Motor neuron (in vitro differentiated cells): ENCODE measurements at regions of chr9 and their contacts with region 1.

Region 1: DNA sequence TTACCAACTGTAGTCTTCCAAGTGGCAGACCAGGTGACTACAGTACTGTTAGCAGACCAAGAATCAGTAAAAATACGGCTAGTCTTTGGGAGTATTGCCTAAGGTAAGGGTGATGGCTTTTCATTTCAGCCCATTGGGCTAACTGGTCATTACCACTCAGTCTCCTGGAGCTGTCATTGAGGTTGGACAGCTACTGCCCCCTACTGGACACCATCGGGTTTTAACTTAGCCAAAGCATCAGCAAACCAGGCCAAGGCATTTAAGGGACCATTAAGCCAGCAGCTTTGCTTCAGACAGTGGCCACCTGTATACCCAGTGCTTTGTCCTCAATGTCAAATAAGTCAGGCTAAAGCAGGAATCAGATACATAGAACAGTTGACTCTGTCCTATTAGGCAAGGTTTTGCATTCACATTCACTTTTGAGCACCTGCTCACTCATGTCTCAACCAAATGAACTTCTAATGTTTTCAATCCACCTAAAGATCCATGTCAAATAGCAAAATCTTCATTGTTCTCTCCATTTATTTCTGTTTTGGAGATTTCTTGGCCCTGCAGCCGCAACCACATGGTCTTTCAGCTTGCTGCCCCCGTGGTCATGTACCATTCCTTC is 117.2 kb downstream of the INVS start:
- ATAC-seq: peak in 3 of 8 experiments; percentile 76 to 91 (median 88)
- H3K4me3 ChIP-seq: no peak overlapping the region
- H3K27ac ChIP-seq: no peak overlapping the region
- H3K4me1 ChIP-seq: no peaks in the 10 kb centered on the region

Region 2: GRCh38 chr9:99162759-99163364 is 1053.4 kb before region 1 on chr9:
- in situ Hi-C with region 1: loop called in 1 of 9 experiments (anchors 25 kb)
- ATAC-seq: peak in 4 of 8 experiments; percentile 9 to 37 (median 19)
- H3K4me3 ChIP-seq: no peak overlapping the region
- H3K27ac ChIP-seq: no peak overlapping the region
- H3K4me1 ChIP-seq: peaks cover 2 to 8% of the 10 kb centered on the region in 2 donors

Region 3: GRCh38 chr9:100028201-100028784 is 188.0 kb before region 1 on chr9:
- in situ Hi-C with region 1: loop called in 3 of 9 experiments (anchors 25 kb)
- ATAC-seq: peak; percentile 41 to 98 (median 70)
- H3K4me3 ChIP-seq: no peak overlapping the region
- H3K27ac ChIP-seq: no peak overlapping the region
- H3K4me1 ChIP-seq: peaks cover 0 to 5% of the 10 kb centered on the region in 2 donors